Activated CD8-positive, alpha-beta memory T cell treated with anti-CD3 and anti-CD28 coated beads, Interleukin-2, amount 10 ng/mL, durations not matched to agents 7 days and 5 days (primary cell): ENCODE measurements at regions of chr10 and their contacts with region 1.

Region 1: GRCh38 chr10:70272925-70273316 is 10.9 kb downstream of the NPFFR1 start:
- DNase-seq: no peak
- ATAC-seq: peak; percentile 89
- H3K4me3 Mint-ChIP-seq: peak overlapping the region; percentile 23
- H3K27ac Mint-ChIP-seq: peak overlapping the region; percentile 45
- H3K4me1 Mint-ChIP-seq: peaks cover 18% of the 10 kb centered on the region
- H3K27me3 Mint-ChIP-seq: no peaks in the 10 kb centered on the region

Region 2: DNA sequence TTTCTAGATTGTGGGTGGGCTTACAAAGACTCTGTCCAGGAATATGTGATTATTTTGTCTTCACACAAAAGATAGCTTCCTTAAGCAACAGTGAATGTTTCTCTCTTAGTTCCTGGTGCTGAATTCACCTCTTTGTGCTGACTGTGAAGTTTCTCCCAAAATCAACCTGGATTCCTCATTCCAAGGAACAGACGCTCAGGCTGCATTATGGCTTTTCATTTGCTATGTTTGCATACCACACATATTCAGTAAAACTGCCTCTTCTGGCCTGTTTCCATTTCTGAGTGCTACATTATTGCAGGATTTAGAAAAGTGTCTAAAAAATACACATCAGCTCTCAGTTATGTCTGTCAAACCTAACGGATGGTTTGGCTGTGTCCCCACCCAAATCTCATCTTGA is 198.8 kb before region 1 on chr10:
- CTCF ChIA-PET with region 1: no interaction called
- DNase-seq: no peak
- ATAC-seq: no peak
- H3K4me3 Mint-ChIP-seq: no peak overlapping the region
- H3K27ac Mint-ChIP-seq: no peak overlapping the region
- H3K4me1 Mint-ChIP-seq: no peaks in the 10 kb centered on the region
- H3K27me3 Mint-ChIP-seq: peaks cover 5% of the 10 kb centered on the region

Region 3: GRCh38 chr10:70233109-70233938 is 39.6 kb before region 1 on chr10 and contains the start of gene PPA1:
- CTCF ChIA-PET with region 1: interaction called, 15 read pairs
- DNase-seq: peak; percentile 99
- ATAC-seq: peak; percentile 96
- H3K4me3 Mint-ChIP-seq: peak within 1 kb of the TSS; percentile 88
- H3K27ac Mint-ChIP-seq: peak within 1 kb of the TSS; percentile 89
- H3K4me1 Mint-ChIP-seq: peaks cover 44% of the 10 kb centered on the region
- H3K27me3 Mint-ChIP-seq: no peaks in the 10 kb centered on the region
- total RNA-seq, gene PPA1: 157 to 192 TPM

Region 4: DNA sequence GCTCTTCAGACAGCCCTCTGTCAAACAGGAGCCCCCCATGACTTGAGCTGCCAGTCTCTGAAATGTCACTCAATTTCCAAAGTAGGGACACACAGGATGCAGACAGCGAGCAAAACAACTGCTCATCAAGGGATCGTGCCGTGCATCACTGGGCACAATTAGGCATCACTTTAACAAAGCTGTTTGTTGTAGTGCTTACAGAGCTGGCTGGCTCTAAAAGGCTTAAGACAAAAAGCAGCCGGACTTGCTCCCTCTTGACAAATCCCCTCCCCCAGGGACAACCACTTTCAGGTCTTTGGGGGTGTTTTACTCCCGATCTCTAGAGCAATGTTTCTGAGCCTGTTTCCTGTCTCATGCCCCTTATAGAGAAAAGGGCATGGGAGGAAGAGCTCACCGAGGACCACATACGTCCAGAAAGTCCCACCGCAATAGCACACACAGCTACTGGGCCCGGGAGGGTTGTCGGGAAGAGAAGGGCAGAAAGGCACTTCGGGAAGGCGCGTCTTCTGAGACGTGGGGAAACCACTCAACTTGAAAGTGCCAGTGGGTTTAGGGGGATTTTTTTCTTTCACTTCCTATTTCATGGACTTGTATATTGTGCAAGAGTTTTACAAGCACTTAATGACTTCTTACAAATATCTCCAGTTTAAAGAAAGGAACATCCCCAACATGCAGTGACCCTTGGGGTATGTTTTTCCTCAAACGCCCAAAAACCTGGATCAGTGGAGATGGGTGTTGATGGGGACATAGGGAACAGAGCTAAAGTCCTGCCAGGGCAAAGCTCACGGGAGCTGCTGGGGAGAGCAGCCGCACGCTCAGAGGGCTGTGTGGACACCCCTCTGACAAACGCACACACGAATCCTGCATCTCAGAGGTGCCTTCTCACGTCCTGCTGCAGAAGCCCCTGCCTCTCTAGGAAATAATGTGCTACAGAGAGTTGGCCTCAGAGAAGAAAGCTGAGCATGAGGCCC is 82.4 kb after region 1 on chr10:
- CTCF ChIA-PET with region 1: interaction called, 167 read pairs
- DNase-seq: peak; percentile 69
- ATAC-seq: peak; percentile 84
- H3K4me3 Mint-ChIP-seq: peak overlapping the region; percentile 73
- H3K27ac Mint-ChIP-seq: peak overlapping the region; percentile 97
- H3K4me1 Mint-ChIP-seq: peaks cover 54% of the 10 kb centered on the region
- H3K27me3 Mint-ChIP-seq: no peaks in the 10 kb centered on the region